Motor neuron (in vitro differentiated cells): ENCODE measurements at regions of chr6 and their contacts with region 1.

Region 1: GRCh38 chr6:37018198-37019064 is 13.0 kb downstream of the FGD2 start:
- ATAC-seq: peak; percentile 95 to 99 (median 96)
- H3K4me3 ChIP-seq: no peak overlapping the region
- H3K27ac ChIP-seq: peak overlapping the region; percentile 33 to 35
- H3K4me1 ChIP-seq: peaks cover 12 to 15% of the 10 kb centered on the region in 2 donors

Region 2: DNA sequence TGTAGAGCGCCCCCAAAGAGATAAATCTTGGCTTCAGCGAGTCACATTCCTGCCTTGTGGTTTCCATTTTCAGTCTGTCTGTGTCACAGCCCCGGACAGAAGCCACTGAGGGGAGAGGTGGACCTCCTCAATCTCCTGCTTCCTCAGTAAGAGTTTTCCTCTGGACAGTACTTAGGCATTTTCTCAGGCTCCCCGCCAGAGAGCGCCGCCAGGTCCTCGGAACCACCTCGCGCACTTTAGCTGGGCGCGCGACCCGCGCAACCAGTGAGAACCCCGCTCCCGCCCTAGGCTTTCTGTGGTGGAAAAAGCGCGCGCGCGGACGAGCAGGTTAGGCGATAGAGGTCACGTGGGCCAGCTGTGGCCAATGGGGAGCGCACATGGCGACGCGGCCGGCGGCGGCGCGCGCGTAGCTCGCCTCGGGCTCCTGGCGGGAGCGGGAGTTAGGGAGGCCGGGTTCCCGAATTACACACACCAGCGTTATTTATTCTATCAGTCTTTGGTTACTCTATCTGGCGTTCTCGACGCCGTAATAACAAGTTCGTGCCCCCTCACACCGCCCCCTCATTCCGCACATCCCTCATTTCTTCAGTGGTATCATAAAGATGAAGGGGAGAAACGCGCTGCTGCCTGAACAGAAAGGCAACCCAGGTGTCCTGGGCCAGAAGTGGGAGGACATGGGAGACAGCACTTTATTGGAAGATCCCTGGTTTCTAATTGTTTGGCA is 595.2 kb before region 1 on chr6:
- in situ Hi-C with region 1: no loop called
- ATAC-seq: peak; percentile 96 to 99 (median 98)
- H3K4me3 ChIP-seq: peak overlapping the region; percentile 35 to 49 (median 40)
- H3K27ac ChIP-seq: peak overlapping the region; percentile 23 to 27
- H3K4me1 ChIP-seq: peaks cover 2 to 3% of the 10 kb centered on the region in 2 donors

Region 3: GRCh38 chr6:36765594-36766398 is 252.6 kb before region 1 on chr6:
- in situ Hi-C with region 1: loop called in 1 of 9 experiments (anchors 25 kb)
- ATAC-seq: peak; percentile 89 to 99 (median 92)
- H3K4me3 ChIP-seq: no peak overlapping the region
- H3K27ac ChIP-seq: no peak overlapping the region
- H3K4me1 ChIP-seq: peaks cover 21 to 30% of the 10 kb centered on the region in 2 donors

Region 4: GRCh38 chr6:37092923-37093920 is 74.8 kb after region 1 on chr6:
- in situ Hi-C with region 1: no loop called
- ATAC-seq: peak in 5 of 8 experiments; percentile 19 to 70 (median 31)
- H3K4me3 ChIP-seq: no peak overlapping the region
- H3K27ac ChIP-seq: peak overlapping the region in 1 of 2 donors; percentile 56
- H3K4me1 ChIP-seq: peaks cover 0 to 11% of the 10 kb centered on the region in 2 donors